K562 (cell line): ENCODE measurements at regions of chr12 and their contacts with region 1.

Region 1: GRCh38 chr12:62934799-62935674 is at the start of gene PPM1H:
- DNase-seq: peak; percentile 88 to 91 (median 89)
- ATAC-seq: peak; percentile 91
- H3K4me3 ChIP-seq: peak within 1 kb of the TSS; percentile 72
- H3K27ac ChIP-seq: peak within 1 kb of the TSS; percentile 67
- H3K4me1 ChIP-seq: peaks cover 10 to 24% of the 10 kb centered on the region in 2 experiments; a peak in 4 of 5 replicates
- H3K27me3 ChIP-seq: peaks cover 0 to 7% of the 10 kb centered on the region in 2 experiments; a peak in 1 of 5 replicates
- CTCF ChIP-seq: peak; percentile 63 to 85 (median 68)
- EP300 ChIP-seq: no peak
- POLR2A ChIP-seq: peak; percentile 64
- RAD21 ChIP-seq: peak; percentile 38 to 48
- polyA plus RNA-seq, gene PPM1H: 5.3 to 8.1 TPM

Region 2: DNA sequence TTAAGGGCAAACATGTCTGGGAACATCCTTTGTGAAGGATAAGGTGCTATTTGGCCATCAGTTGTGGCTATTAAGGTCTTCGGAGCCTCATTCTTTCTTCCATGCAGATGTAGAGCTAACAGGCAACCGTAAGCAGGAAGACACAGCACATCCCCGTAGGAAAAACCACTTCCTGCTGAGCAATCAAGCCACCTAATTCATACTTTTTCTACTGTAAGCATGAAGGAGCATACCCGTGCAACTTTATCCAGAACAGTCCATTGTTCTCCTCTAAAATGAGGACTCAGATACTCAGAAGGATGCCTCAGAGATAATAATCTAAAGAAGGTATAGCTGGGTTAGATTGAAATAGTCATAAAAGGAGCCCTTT is 232.0 kb before region 1 on chr12:
- CTCF ChIA-PET with region 1: no interaction called
- POLR2A ChIA-PET with region 1: no interaction called
- in situ Hi-C with region 1: no loop called
- intact Hi-C with region 1: no loop called
- DNase-seq: no peak
- ATAC-seq: no peak
- H3K4me3 ChIP-seq: no peak overlapping the region
- H3K27ac ChIP-seq: no peak overlapping the region
- H3K4me1 ChIP-seq: no peaks in the 10 kb centered on the region; a peak in 1 of 5 replicates
- H3K27me3 ChIP-seq: no peaks in the 10 kb centered on the region
- CTCF ChIP-seq: no peak
- EP300 ChIP-seq: no peak
- POLR2A ChIP-seq: no peak
- RAD21 ChIP-seq: no peak

Region 3: GRCh38 chr12:62813031-62813829 is 121.8 kb before region 1 on chr12:
- CTCF ChIA-PET with region 1: no interaction called
- POLR2A ChIA-PET with region 1: no interaction called
- in situ Hi-C with region 1: no loop called
- intact Hi-C with region 1: loop called (anchors 5 kb)
- DNase-seq: peak; percentile 29 to 65 (median 40)
- ATAC-seq: peak; percentile 81
- H3K4me3 ChIP-seq: no peak overlapping the region
- H3K27ac ChIP-seq: no peak overlapping the region
- H3K4me1 ChIP-seq: peaks cover 0 to 11% of the 10 kb centered on the region in 2 experiments; a peak in 3 of 5 replicates
- H3K27me3 ChIP-seq: no peaks in the 10 kb centered on the region; a peak in 1 of 5 replicates
- CTCF ChIP-seq: peak; percentile 58 to 74 (median 61)
- EP300 ChIP-seq: no peak
- POLR2A ChIP-seq: no peak
- RAD21 ChIP-seq: peak in 1 of 2 experiments; percentile 54; a peak in 3 of 4 replicates

Region 4: DNA sequence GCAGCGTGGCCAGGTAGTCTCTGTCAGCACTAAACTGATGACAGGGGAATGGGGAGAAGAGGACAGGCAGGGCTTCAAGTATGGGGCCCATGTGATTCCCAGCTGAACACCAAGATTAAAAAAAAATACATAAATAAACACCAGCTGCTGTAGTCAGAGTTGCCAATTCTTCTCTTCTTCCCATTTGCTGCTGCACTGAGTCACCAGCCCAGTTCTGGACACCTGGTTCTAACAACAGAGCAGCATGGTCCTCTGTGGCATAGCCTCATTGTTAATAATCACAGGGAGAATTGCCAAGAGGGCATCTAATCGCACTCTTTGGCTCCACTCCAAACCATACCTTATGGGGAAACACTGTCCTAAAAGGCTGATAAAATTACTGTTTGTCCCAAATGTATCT is 15.2 kb before region 1 on chr12:
- CTCF ChIA-PET with region 1: no interaction called
- POLR2A ChIA-PET with region 1: interaction called, 11 read pairs
- in situ Hi-C with region 1: no loop called
- intact Hi-C with region 1: no loop called
- DNase-seq: no peak
- ATAC-seq: no peak
- H3K4me3 ChIP-seq: no peak overlapping the region
- H3K27ac ChIP-seq: no peak overlapping the region
- H3K4me1 ChIP-seq: peaks cover 4 to 6% of the 10 kb centered on the region in 2 experiments; a peak in 3 of 5 replicates
- H3K27me3 ChIP-seq: no peaks in the 10 kb centered on the region
- CTCF ChIP-seq: no peak
- EP300 ChIP-seq: no peak
- POLR2A ChIP-seq: no peak
- RAD21 ChIP-seq: no peak

Region 5: DNA sequence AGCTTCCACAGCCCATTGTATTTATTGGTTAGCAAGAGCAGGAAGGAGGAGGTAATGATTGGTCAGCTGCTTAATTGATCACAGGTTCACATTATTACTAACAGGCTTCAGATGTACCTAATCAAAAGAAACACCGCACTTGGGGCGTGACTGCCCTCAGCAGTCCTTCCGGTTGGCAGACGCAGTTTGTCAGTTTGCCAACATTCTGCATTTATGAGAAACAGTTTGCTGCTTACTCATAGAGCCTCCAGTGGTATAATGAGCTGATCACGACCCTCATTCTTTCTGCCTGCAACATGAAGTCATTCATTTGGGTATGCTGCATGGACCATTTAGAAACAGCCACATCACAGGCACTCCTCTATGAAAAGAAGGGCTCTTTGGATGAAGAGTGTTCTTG is 42.4 kb after region 1 on chr12:
- CTCF ChIA-PET with region 1: no interaction called
- POLR2A ChIA-PET with region 1: interaction called, 3 read pairs
- in situ Hi-C with region 1: no loop called
- intact Hi-C with region 1: loop called (anchors 2 kb)
- DNase-seq: peak in 2 of 4 experiments; percentile 13 to 52
- ATAC-seq: peak; percentile 71
- H3K4me3 ChIP-seq: no peak overlapping the region
- H3K27ac ChIP-seq: peak overlapping the region; percentile 75
- H3K4me1 ChIP-seq: peaks cover 3 to 14% of the 10 kb centered on the region in 2 experiments; a peak in 3 of 5 replicates
- H3K27me3 ChIP-seq: no peaks in the 10 kb centered on the region
- CTCF ChIP-seq: no peak
- EP300 ChIP-seq: no peak
- POLR2A ChIP-seq: no peak
- RAD21 ChIP-seq: no peak

Region 6: GRCh38 chr12:64147011-64147631 is 1212.1 kb after region 1 on chr12:
- CTCF ChIA-PET with region 1: no interaction called
- POLR2A ChIA-PET with region 1: no interaction called
- in situ Hi-C with region 1: no loop called
- intact Hi-C with region 1: no loop called
- DNase-seq: no peak
- ATAC-seq: no peak
- H3K4me3 ChIP-seq: no peak overlapping the region
- H3K27ac ChIP-seq: no peak overlapping the region
- H3K4me1 ChIP-seq: no peaks in the 10 kb centered on the region
- H3K27me3 ChIP-seq: peaks cover 0 to 18% of the 10 kb centered on the region in 2 experiments; a peak in 2 of 5 replicates
- CTCF ChIP-seq: no peak
- EP300 ChIP-seq: no peak
- POLR2A ChIP-seq: no peak
- RAD21 ChIP-seq: no peak